ENCODE measurements at regions of chr22 and their contacts with region 1.

Region 1: GRCh38 chr22:26672590-26673468 is 15.4 kb downstream of the MIAT start:
- DNase-seq: peak; percentile 94
- ATAC-seq: peak; percentile 89
- H3K4me3 ChIP-seq: peak overlapping the region; percentile 73
- H3K27ac ChIP-seq: peak overlapping the region; percentile 92
- H3K4me1 ChIP-seq: peaks cover 10% of the 10 kb centered on the region
- H3K27me3 ChIP-seq: no peaks in the 10 kb centered on the region
- CTCF ChIP-seq: peak; percentile 62
- POLR2A ChIP-seq: peak; percentile 87
- RAD21 ChIP-seq: no peak; the same call in 1 of the 2 replicates

Region 2: DNA sequence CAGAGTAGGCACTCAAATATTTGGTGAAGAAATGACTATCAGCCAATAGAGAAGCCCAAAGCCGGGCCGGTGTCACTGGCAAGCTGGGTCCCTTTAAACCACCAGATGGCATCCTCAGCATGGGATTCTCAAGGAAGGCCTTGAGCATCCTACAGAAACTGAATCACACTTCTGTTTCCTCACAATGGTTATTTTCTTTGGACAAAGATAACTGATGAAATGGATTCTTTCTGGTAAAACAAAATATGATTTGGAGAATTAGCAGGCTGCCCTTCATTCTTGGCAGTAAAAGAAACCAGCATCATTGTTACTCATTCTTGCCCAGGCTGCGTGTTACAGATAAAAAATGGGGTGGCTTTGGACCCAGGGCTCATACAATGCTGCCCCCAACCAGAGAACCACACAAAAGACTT is 274.1 kb before region 1 on chr22:
- CTCF ChIA-PET with region 1: no interaction called
- POLR2A ChIA-PET with region 1: no interaction called
- dilution Hi-C with region 1: no loop called
- in situ Hi-C with region 1: no loop called
- intact Hi-C with region 1: loop called (anchors 5 kb)
- DNase-seq: peak; percentile 77
- ATAC-seq: peak; percentile 97
- H3K4me3 ChIP-seq: no peak overlapping the region
- H3K27ac ChIP-seq: no peak overlapping the region
- H3K4me1 ChIP-seq: no peaks in the 10 kb centered on the region
- H3K27me3 ChIP-seq: peaks cover 16% of the 10 kb centered on the region
- CTCF ChIP-seq: peak; percentile 92
- POLR2A ChIP-seq: no peak
- RAD21 ChIP-seq: peak; percentile 94

Region 3: DNA sequence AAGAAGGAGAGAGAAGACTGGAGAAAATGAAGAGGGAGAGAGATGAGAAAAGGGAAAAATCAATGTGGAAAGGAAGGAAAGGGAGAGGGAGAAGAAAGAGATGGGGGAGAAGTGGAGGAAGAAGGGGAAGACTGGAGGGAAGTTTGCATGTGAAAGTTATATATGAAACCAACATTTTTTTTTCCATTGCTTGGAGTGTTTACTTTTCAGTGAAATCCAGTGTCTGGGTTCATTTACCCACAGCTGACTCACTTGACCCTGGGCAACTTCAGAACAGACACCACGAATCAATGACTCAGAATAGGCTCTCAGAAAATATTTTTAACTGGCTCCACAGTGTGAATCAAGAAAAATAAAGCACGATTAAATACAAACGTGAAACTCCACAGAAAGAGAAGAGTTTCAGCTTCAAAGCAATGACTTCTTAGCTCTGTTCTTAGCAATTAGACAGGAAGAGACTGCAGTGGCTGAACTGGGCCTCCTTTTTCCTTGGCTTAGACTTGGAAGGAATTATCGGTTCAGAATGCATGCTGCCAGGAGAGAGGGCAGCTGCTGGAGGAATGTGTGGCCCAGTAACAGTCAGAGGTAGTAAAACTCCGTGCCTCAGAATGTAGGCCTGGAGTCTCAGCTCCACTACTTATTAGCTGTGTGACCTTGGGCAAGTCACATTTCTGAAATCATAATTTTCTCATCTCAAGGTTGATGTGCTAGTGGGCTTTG is 222.1 kb after region 1 on chr22:
- CTCF ChIA-PET with region 1: no interaction called
- POLR2A ChIA-PET with region 1: no interaction called
- dilution Hi-C with region 1: no loop called
- in situ Hi-C with region 1: no loop called
- intact Hi-C with region 1: loop called (anchors 10 kb)
- DNase-seq: peak; percentile 92
- ATAC-seq: peak; percentile 98
- H3K4me3 ChIP-seq: no peak overlapping the region
- H3K27ac ChIP-seq: peak overlapping the region; percentile 94
- H3K4me1 ChIP-seq: peaks cover 24% of the 10 kb centered on the region; the same call in 1 of the 2 replicates
- H3K27me3 ChIP-seq: peaks cover 8% of the 10 kb centered on the region; the same call in 1 of the 2 replicates
- CTCF ChIP-seq: no peak
- POLR2A ChIP-seq: no peak
- RAD21 ChIP-seq: peak; percentile 11; the same call in 1 of the 2 replicates

Region 4: GRCh38 chr22:26974914-26975803 is 302.3 kb after region 1 on chr22:
- CTCF ChIA-PET with region 1: no interaction called
- POLR2A ChIA-PET with region 1: no interaction called
- dilution Hi-C with region 1: no loop called
- in situ Hi-C with region 1: no loop called
- intact Hi-C with region 1: loop called (anchors 10 kb)
- DNase-seq: no peak
- ATAC-seq: no peak
- H3K4me3 ChIP-seq: no peak overlapping the region
- H3K27ac ChIP-seq: no peak overlapping the region
- H3K4me1 ChIP-seq: no peaks in the 10 kb centered on the region
- H3K27me3 ChIP-seq: peaks cover 8% of the 10 kb centered on the region
- CTCF ChIP-seq: no peak
- POLR2A ChIP-seq: no peak
- RAD21 ChIP-seq: no peak

Region 5: GRCh38 chr22:27113211-27113635 is 440.4 kb after region 1 on chr22:
- CTCF ChIA-PET with region 1: no interaction called
- POLR2A ChIA-PET with region 1: no interaction called
- dilution Hi-C with region 1: no loop called
- in situ Hi-C with region 1: no loop called
- intact Hi-C with region 1: loop called (anchors 10 kb)
- DNase-seq: peak; percentile 97
- ATAC-seq: peak; percentile 73
- H3K4me3 ChIP-seq: no peak overlapping the region
- H3K27ac ChIP-seq: no peak overlapping the region
- H3K4me1 ChIP-seq: peaks cover 19% of the 10 kb centered on the region
- H3K27me3 ChIP-seq: no peaks in the 10 kb centered on the region; the same call in 1 of the 2 replicates
- CTCF ChIP-seq: no peak
- POLR2A ChIP-seq: no peak
- RAD21 ChIP-seq: peak; percentile 6; the same call in 1 of the 2 replicates

Measured in IMR-90 (cell line).